Psoas muscle (tissue), 8 donors: ENCODE measurements at regions of chr12 and their contacts with region 1.

Region 1: DNA sequence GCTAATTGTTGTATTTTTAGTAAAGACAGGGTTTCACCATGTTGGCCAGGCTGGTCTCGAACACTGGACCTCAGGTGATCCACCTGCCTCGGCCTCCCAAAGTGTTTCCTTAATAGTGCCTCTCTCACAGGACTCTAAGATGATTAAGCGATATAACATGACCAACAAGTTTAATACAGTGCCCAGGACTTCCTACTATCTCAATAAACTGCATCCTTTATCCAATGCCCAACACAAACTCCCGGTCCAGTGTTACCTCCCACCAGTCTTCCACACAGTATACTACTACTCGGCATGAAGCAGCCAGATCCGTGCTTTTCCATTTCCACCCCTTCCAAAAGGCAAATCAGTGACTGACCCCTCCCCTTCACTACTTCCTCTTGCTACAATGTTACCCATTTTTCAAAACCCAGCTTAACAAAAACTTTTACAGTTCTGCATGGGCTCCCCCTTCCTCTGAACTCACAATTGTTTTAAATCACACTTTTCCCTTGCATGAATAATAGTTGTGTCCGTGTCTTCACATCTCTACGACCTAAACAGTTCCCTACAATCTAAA is 900 bp downstream of the NOP2 start:
- DNase-seq: no peak
- ATAC-seq: no peak
- H3K4me3 ChIP-seq: peak overlapping the region; percentile 79
- H3K27ac ChIP-seq: peak overlapping the region; percentile 87
- H3K4me1 ChIP-seq: peaks cover 9% of the 10 kb centered on the region
- H3K27me3 ChIP-seq: no peaks in the 10 kb centered on the region
- CTCF ChIP-seq: no peak

Region 2: GRCh38 chr12:6607751-6608591 is 40.8 kb after region 1 on chr12:
- intact Hi-C with region 1: loop called in 1 of 2 experiments (anchors 5 kb)
- DNase-seq: peak in 1 of 2 donors; percentile 52
- ATAC-seq: peak in 3 of 4 donors; percentile 6 to 27 (median 23)
- H3K4me3 ChIP-seq: no peak overlapping the region
- H3K27ac ChIP-seq: peak overlapping the region; percentile 69
- H3K4me1 ChIP-seq: peaks cover 36% of the 10 kb centered on the region
- H3K27me3 ChIP-seq: no peaks in the 10 kb centered on the region
- CTCF ChIP-seq: no peak

Region 3: DNA sequence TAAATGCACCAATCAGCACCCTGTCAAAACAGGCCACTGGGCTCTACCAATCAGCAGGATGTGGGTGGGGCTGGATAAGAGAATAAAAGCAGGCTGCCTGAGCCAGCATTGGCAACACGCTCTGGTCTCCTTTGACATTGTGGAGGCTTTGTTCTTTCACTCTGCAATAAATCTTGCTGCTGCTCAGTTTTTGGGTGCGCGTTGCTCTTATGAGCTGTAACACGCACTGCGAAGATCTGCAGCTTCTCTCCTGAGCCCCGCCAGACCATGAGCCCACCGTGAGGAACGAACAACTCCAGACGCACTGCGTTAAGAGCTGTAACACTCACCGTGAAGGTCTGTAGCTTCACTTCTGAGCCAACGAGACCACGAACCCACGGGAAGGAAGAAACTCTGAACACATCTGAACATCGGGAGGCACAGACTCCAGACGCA is 141.8 kb after region 1 on chr12:
- intact Hi-C with region 1: no loop called
- DNase-seq: no peak
- ATAC-seq: no peak
- H3K4me3 ChIP-seq: no peak overlapping the region
- H3K27ac ChIP-seq: no peak overlapping the region
- H3K4me1 ChIP-seq: no peaks in the 10 kb centered on the region
- H3K27me3 ChIP-seq: peaks cover 0 to 59% (median 6%) of the 10 kb centered on the region in 3 donors
- CTCF ChIP-seq: no peak